ENCODE measurements at regions of chr11 and their contacts with region 1.

Region 1: DNA sequence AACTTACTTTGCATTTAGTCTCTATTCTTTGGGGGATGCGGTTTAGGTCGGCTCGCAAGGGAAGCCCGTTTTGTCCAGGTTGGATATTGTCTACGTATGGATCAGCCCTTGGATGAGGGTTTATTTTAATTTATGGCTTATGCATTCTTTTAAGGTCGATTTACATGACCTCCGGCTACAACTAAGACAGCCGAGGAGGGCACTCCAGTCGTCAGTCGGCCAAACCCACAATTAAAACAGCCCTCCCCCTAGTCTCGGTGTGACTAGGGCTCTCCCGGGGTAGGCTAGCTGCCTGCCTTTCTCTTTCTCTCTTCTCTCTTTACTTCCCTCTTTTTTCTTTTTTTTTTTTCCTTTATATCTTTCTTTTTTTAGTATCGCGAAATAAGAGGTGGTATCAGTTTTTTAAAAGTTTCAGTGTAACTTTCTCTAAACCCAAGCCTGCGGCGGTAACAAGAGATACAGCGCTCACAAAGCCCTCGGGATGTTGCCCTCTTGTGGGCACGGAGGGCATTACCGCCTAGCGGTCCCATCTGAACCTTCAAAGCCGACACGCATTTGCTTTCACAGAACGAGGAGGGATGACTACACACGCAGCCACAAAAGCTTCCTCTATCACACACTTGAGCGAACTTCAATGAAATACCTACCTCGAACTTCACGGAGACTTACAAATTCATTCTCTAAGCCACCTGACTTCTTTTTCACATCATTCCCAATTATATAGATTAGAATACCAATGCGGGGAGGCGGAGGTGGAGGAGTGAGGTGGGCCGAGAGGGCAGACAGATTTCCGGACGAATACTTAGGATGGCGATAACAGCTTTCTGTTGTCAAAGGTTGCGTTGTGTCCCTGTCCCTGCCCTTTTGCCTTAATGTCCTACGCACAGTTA is 132.3 kb upstream of the C11orf58 start:
- DNase-seq: peak; percentile 92 to 96
- H3K4me3 ChIP-seq: peak overlapping the region; percentile 81 to 84
- H3K27ac ChIP-seq: peak overlapping the region; percentile 95 to 100
- H3K4me1 ChIP-seq: peaks cover 0 to 26% (median 4%) of the 10 kb centered on the region in 4 donors
- H3K27me3 ChIP-seq: peaks cover 0 to 3% of the 10 kb centered on the region in 2 donors
- CTCF ChIP-seq: peak; percentile 95 to 98

Region 2: GRCh38 chr11:15650105-15650938 is 955.8 kb before region 1 on chr11:
- intact Hi-C with region 1: loop called (anchors 2 kb)
- DNase-seq: peak; percentile 93 to 97
- H3K4me3 ChIP-seq: peak overlapping the region; percentile 44 to 48
- H3K27ac ChIP-seq: peak overlapping the region; percentile 77
- H3K4me1 ChIP-seq: peaks cover 0 to 18% (median 13%) of the 10 kb centered on the region in 4 donors
- H3K27me3 ChIP-seq: no peaks in the 10 kb centered on the region
- CTCF ChIP-seq: peak; percentile 98 to 99

Region 3: DNA sequence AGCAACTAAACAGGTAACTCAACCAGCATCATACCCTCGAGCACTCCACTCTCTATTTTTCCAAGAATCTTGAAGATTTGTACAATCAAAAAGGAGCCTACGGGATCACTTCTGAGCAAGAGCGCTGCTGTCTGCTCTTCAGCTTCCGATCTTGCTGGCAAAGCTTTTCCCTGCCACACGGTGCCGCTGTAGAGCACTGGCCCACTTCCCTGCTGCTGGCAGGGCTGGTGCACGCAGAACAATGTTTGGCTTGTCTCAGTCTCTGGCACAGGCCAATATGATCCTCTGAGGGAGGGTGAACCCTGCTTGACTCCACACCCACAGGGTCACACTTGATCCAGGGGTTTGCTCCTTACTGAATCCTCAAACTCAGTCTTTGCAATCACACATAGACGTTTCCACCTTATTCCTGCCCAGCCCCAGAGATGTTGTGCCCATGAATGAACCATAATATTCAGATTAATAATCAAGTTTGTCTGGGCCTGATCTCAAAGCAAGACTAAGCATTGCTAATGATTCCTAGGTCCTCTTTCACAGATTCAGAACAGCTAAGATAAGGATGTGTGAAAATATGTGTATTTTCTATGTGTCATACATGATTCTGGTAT is 786.4 kb before region 1 on chr11:
- intact Hi-C with region 1: loop called (anchors 10 kb)
- DNase-seq: peak; percentile 60 to 80
- H3K4me3 ChIP-seq: no peak overlapping the region
- H3K27ac ChIP-seq: no peak overlapping the region
- H3K4me1 ChIP-seq: peaks cover 0 to 50% (median 34%) of the 10 kb centered on the region in 4 donors
- H3K27me3 ChIP-seq: no peaks in the 10 kb centered on the region
- CTCF ChIP-seq: peak; percentile 57 to 84

Region 4: DNA sequence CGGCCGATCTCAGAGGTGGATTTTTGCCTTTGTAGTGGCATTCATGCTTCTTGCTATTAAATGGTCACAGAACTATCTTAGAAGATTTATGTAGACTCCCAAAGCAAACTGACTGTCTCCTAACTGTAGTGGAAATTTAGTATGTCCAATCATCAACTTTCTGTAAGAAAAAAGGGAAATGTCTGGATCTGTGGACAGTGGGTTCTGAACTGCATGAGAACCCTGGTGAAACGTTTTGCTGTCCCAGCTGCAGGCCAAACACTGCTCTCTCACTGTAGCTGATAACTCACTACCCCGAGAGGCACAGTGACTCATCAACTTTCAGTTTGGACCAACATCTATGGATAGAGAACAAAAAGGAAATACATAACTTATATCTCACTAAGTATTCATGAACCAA is 636.9 kb before region 1 on chr11:
- intact Hi-C with region 1: loop called (anchors 5 kb)
- DNase-seq: peak; percentile 64 to 83
- H3K4me3 ChIP-seq: peak overlapping the region; percentile 15 to 29
- H3K27ac ChIP-seq: peak overlapping the region; percentile 79 to 81
- H3K4me1 ChIP-seq: peaks cover 0 to 33% (median 17%) of the 10 kb centered on the region in 4 donors
- H3K27me3 ChIP-seq: no peaks in the 10 kb centered on the region
- CTCF ChIP-seq: no peak

Region 5: DNA sequence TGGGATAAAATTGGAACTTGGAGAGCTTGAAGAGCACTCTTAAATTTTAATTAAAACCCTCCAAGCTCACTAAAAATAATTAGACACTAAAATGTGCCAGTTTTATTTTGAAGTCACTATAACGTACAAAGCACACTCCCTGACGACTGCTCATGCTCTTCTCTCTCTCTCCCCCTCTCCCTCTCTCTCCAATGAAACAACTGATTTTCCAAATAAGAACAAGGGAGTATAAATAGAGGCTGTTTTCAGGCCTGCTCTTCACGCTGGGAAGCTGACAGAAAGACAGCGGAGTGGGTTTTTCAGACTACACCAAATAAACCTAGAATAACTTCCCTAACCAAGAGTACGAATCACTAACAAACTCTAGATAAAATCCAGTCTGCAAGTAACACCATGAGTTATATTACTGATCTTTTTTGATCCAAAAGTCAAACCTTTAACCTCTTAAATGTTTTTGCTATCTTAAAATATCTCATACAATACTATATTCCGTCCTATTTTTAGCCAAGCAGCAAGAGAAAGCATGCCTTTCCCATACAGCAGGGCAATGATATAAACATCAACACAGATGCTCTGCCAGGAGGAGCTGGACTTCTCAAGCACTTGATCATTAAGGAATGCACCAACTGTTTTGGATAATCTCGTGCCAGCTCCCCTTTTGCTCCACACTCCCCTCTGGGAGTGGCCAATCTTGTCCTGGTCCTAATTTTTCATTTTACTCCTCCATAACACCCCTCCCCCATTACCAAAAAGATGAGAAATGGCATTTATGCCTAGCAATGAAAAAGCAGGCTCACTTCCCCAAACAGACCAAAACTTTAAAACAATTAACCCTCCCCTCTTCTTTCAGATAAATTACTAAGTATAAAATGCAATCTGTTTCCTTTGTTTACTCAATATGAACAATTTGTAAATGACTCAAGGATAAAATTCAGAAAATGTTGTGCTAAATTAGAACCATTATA is 366.7 kb before region 1 on chr11:
- intact Hi-C with region 1: loop called (anchors 5 kb)
- DNase-seq: no peak
- H3K4me3 ChIP-seq: peak overlapping the region; percentile 2 to 16
- H3K27ac ChIP-seq: peak overlapping the region; percentile 58 to 72
- H3K4me1 ChIP-seq: peaks cover 0 to 40% (median 0%) of the 10 kb centered on the region in 4 donors
- H3K27me3 ChIP-seq: no peaks in the 10 kb centered on the region
- CTCF ChIP-seq: no peak

Region 6: GRCh38 chr11:16454289-16454863 is 151.8 kb before region 1 on chr11:
- intact Hi-C with region 1: no loop called
- DNase-seq: no peak
- H3K4me3 ChIP-seq: no peak overlapping the region
- H3K27ac ChIP-seq: no peak overlapping the region
- H3K4me1 ChIP-seq: peaks cover 0 to 16% (median 0%) of the 10 kb centered on the region in 4 donors
- H3K27me3 ChIP-seq: no peaks in the 10 kb centered on the region
- CTCF ChIP-seq: no peak

Region 7: GRCh38 chr11:18395735-18396504 is 1789.8 kb after region 1 on chr11:
- intact Hi-C with region 1: loop called (anchors 10 kb)
- DNase-seq: peak; percentile 98 to 99
- H3K4me3 ChIP-seq: peak overlapping the region; percentile 90 to 97
- H3K27ac ChIP-seq: peak overlapping the region; percentile 97 to 99
- H3K4me1 ChIP-seq: peaks cover 0 to 45% (median 27%) of the 10 kb centered on the region in 4 donors
- H3K27me3 ChIP-seq: no peaks in the 10 kb centered on the region
- CTCF ChIP-seq: no peak

Measured in tibial artery (tissue), 4 donors.